Esophagus squamous epithelium (tissue), 5 donors: ENCODE measurements at regions of chr6 and their contacts with region 1.

Region 1: DNA sequence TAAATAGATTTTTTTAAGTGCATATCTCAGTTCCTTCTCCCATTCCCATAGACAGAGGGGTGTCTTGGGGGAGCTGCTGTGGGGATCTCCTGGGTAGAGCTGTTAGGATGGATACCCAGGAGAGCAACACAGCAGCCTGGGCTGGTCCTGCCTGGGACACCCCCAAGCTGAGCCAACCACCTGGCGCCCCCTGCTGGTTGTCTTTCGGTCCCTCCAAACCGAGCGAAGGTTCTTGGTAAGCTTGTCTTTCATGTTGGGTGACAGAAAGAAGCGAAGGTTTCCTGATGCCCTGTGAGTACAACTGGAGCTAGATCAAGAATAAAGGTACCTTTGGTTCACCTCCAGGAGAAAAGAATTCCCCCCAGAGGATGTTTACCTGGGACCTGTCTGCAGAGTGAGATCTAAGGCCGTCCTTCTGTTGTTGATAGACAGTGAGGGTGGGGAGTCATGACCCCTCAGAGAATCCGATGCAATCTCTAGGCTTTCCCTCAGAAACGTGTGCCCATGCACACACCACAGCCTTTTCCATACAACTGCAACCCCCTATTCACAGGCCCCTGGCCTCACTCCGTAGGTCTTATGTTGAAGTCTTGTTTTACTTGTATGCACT is 50.8 kb downstream of the SNX9 start:
- DNase-seq: peak; percentile 5
- H3K4me3 ChIP-seq: no peak overlapping the region
- H3K27ac ChIP-seq: no peak overlapping the region
- H3K4me1 ChIP-seq: peaks cover 0 to 4% (median 0%) of the 10 kb centered on the region in 3 donors
- H3K27me3 ChIP-seq: no peaks in the 10 kb centered on the region
- CTCF ChIP-seq: peak; percentile 66 to 90 (median 82)
- POLR2A ChIP-seq: no peak

Region 2: DNA sequence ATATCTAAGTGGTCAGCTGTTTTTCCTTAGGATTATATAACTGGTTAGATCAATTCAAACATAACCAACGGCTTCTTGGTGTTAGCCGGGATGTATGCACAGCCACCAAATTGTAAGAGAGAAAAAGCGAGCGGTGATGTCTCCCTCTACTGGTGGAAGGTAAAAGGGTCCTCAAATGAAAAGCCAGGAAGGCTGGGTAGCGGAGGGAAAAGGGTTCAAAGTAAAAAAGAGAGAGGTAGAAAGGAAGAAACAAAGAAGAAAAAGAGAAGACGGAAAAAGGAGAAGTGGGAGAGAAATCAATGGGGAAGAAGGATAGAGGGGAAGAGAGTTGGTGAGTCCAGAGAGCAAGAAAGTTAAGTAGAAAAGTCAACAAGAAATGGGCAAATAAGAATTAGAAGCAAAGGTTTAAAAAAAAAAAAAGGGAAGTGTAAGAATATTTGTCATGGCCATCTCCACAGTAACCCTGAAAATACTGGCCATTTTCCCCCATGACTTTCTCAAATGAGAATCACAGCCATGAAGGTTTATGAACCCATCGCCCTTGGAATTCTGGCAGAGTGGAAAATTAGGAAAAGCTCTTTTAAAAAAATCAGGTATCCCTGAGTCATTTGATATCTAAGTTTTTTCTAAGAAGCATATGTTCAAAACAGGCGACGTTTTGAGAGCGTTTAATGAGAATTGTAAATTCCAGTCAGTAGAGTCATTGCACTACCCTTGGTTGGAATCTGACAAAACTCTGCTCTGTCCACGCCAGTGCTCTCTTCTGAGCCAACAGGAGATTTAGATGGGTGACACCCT is 206.4 kb before region 1 on chr6:
- intact Hi-C with region 1: loop called (anchors 10 kb)
- DNase-seq: no peak
- H3K4me3 ChIP-seq: no peak overlapping the region
- H3K27ac ChIP-seq: no peak overlapping the region
- H3K4me1 ChIP-seq: peaks cover 5 to 22% (median 14%) of the 10 kb centered on the region in 3 donors
- H3K27me3 ChIP-seq: no peaks in the 10 kb centered on the region
- CTCF ChIP-seq: peak; percentile 72 to 87 (median 82)
- POLR2A ChIP-seq: no peak

Region 3: DNA sequence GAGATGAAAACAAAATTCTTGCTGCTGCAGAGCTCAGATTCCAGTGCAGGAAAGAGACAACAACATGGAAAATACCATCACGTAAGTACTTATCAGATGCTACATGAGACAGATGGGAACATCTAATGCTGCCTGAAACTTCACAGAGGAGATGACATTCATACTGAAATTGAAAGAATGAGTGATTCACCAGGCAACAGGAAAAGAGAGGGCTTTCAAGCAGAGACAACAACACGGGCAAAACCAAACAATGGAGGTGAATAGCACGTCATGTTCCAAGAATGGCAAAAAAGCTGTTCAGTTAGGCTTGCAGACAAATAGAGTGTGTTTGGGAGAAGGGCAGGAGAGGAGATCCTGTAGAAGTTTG is 333.6 kb after region 1 on chr6:
- intact Hi-C with region 1: no loop called
- DNase-seq: no peak
- H3K4me3 ChIP-seq: no peak overlapping the region
- H3K27ac ChIP-seq: no peak overlapping the region
- H3K4me1 ChIP-seq: peaks cover 0 to 8% (median 0%) of the 10 kb centered on the region in 3 donors
- H3K27me3 ChIP-seq: peaks cover 0 to 6% (median 0%) of the 10 kb centered on the region in 4 donors
- CTCF ChIP-seq: no peak
- POLR2A ChIP-seq: no peak